Transverse colon (tissue), 4 donors: ENCODE measurements at regions of chr6 and their contacts with region 1.

Region 1: DNA sequence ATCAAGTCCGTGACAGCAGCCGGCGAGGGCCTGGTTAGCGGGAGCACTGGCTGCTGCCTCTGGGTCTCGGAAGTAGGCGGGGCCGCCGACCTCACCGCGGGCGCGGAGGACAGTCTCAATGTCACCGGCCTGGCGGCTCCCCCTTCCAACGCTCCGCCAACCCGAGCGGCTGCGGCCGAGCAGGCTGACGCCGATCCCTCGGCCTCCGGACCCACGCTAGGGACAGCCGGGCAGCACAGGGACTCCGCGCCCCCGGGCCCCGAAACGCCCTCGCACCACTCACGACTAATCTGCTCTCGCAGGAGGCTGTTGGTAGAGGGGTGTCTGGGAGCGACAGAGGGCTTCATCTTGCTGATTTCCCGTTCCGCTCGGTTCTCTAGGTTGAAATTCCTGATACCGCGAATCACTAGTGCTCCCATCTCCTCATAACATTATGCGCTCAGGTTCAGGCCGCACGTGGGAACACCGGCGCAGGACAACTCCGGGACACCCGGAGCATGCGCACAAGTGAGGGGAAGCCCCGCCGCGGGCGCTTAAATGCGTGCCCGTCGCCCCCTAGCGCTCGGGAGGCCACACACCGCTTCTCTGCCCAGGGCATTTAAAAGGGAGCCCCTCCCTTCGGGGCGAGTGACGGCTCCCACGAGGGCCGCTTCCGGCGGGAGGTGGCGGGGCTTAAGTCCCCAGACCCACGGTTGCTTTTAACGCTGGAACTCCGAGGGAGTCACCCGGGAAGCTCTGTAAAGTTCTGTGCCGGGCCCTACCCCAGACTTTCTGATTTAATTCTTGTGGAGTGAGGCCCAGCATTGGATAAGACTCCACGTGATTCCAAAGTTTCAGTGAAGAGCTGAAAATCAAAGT is at the start of gene NDUFAF4:
- DNase-seq: peak; percentile 98
- H3K4me3 ChIP-seq: peak within 1 kb of the TSS; percentile 84 to 93 (median 92)
- H3K27ac ChIP-seq: peak within 1 kb of the TSS; percentile 94 to 99 (median 98)
- H3K4me1 ChIP-seq: peaks cover 7 to 36% (median 24%) of the 10 kb centered on the region in 4 donors
- H3K27me3 ChIP-seq: no peaks in the 10 kb centered on the region
- CTCF ChIP-seq: peak; percentile 88 to 98 (median 95)
- EP300 ChIP-seq: no peak
- POLR2A ChIP-seq: peak; percentile 74
- total RNA-seq, gene NDUFAF4: 9.4 to 26.5 (median 20.9) TPM

Region 2: GRCh38 chr6:96542702-96543101 is 354.9 kb before region 1 on chr6:
- in situ Hi-C with region 1: loop called in 1 of 4 experiments (anchors 25 kb)
- intact Hi-C with region 1: no loop called
- DNase-seq: no peak
- H3K4me3 ChIP-seq: no peak overlapping the region
- H3K27ac ChIP-seq: no peak overlapping the region
- H3K4me1 ChIP-seq: no peaks in the 10 kb centered on the region
- H3K27me3 ChIP-seq: no peaks in the 10 kb centered on the region
- CTCF ChIP-seq: no peak
- EP300 ChIP-seq: no peak
- POLR2A ChIP-seq: no peak

Region 3: DNA sequence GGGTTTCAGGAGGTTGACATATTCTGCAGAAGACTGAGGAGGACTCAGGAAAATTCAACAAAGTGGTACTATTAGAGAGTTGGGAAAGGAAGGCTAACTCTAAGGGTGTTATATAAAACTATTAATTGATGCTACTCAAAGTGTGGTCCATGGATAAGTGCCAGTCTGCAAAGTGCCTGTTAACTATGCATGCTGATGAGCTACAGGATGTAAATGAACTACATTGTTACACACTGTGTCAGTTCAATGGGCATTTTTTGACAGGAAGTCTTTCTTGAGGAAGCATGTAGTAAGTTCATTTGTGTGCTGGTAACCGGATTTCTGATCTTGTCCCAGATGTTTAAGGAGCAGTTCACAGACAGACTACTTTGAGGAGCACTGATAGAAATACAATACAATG is 102.5 kb after region 1 on chr6:
- in situ Hi-C with region 1: no loop called
- intact Hi-C with region 1: no loop called
- DNase-seq: no peak
- H3K4me3 ChIP-seq: no peak overlapping the region
- H3K27ac ChIP-seq: no peak overlapping the region
- H3K4me1 ChIP-seq: no peaks in the 10 kb centered on the region
- H3K27me3 ChIP-seq: no peaks in the 10 kb centered on the region
- CTCF ChIP-seq: no peak
- EP300 ChIP-seq: no peak
- POLR2A ChIP-seq: no peak

Region 4: GRCh38 chr6:97053643-97054411 is 156.2 kb after region 1 on chr6:
- in situ Hi-C with region 1: loop called (anchors 5 to 10 kb)
- intact Hi-C with region 1: loop called (anchors 10 kb)
- DNase-seq: no peak
- H3K4me3 ChIP-seq: no peak overlapping the region
- H3K27ac ChIP-seq: no peak overlapping the region
- H3K4me1 ChIP-seq: no peaks in the 10 kb centered on the region
- H3K27me3 ChIP-seq: no peaks in the 10 kb centered on the region
- CTCF ChIP-seq: peak; percentile 45 to 60 (median 58)
- EP300 ChIP-seq: no peak
- POLR2A ChIP-seq: no peak

Region 5: GRCh38 chr6:97059473-97059872 is 161.9 kb after region 1 on chr6:
- in situ Hi-C with region 1: loop called (anchors 5 to 10 kb)
- intact Hi-C with region 1: loop called (anchors 10 kb)
- DNase-seq: no peak
- H3K4me3 ChIP-seq: no peak overlapping the region
- H3K27ac ChIP-seq: no peak overlapping the region
- H3K4me1 ChIP-seq: no peaks in the 10 kb centered on the region
- H3K27me3 ChIP-seq: no peaks in the 10 kb centered on the region
- CTCF ChIP-seq: peak; percentile 44 to 53 (median 46)
- EP300 ChIP-seq: no peak
- POLR2A ChIP-seq: no peak